Dendritic cell treated with granulocyte-macrophage colony-stimulating factor and Interleukin-4, amounts not matched to agents 40 ng/mL and 50 ng/mL, for 4 days (primary cell): ENCODE measurements at regions of chr16 and their contacts with region 1.

Region 1: DNA sequence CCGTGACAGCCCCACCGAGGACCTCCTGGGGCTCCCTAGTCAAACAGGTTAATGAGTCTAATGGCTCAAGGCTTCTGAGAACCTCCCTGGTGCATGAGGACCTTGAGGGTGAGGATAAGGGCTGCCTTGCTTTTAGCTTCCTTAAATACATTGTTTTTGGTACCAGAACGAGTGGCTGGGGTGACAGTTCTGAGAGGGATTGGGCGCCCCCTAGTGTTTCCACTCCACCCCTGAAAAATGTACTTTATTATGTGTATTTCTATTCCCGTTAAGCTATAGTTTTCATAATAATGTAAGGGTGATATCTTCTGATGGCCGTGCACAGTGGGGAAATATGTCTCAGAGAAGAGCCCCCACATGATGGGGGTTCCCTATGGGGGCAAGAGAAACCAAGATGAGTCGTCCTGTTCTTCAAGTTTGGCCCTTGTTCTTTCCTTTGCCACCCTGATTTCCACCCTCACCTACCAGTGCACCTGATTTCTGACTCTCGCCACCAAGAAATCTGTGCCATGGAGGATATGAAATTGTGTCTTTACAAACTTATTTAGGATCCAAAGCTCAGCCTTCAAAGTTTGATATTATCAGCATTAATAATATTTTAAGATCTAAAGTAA is 14.5 kb upstream of the VWA3A start:
- H3K4me3 Mint-ChIP-seq: no peak overlapping the region
- H3K27ac Mint-ChIP-seq: no peak overlapping the region
- H3K4me1 Mint-ChIP-seq: no peaks in the 10 kb centered on the region
- H3K27me3 Mint-ChIP-seq: no peaks in the 10 kb centered on the region

Region 2: DNA sequence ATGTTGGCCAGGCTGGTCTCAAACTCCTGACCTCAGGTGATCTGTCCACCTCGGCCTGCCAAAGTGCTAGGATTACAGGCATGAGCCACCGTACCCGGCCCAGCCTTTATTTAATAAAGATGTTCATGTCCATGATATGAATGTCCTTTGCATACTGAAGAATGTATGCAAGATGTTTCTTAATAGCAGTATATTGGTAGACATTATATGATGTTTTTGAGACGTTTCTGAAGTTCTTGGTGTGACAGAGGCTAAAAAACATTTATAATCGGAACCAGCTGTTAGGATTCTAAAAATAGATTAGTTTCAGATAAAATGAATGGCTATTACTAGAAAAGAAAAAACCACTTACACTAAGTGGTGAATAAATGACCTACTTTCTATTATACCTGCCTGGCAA is 88.7 kb before region 1 on chr16:
- intact Hi-C with region 1: no loop called
- H3K4me3 Mint-ChIP-seq: no peak overlapping the region
- H3K27ac Mint-ChIP-seq: no peak overlapping the region
- H3K4me1 Mint-ChIP-seq: no peaks in the 10 kb centered on the region
- H3K27me3 Mint-ChIP-seq: no peaks in the 10 kb centered on the region

Region 3: DNA sequence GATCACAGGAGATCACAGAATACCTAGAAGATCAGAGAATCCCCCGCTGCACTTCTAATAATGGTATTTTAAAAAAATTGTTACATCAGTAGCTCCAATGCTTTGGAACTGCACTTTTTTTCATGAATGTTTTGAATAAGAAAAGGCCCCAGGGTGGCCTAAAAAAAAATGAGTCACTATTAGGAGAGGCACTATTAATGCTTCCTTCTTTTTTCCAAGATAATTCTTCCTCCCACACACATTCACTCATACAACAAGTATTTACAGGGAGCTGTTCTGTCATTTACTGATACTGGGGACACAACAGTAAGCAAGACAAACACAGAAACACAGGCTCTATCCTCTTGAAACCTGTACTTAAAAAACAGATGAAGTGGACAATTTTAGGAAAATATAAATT is 76.2 kb before region 1 on chr16:
- intact Hi-C with region 1: loop called (anchors 2 kb)
- H3K4me3 Mint-ChIP-seq: no peak overlapping the region
- H3K27ac Mint-ChIP-seq: no peak overlapping the region
- H3K4me1 Mint-ChIP-seq: peaks cover 22% of the 10 kb centered on the region
- H3K27me3 Mint-ChIP-seq: peaks cover 9% of the 10 kb centered on the region

Region 4: GRCh38 chr16:22050963-22051362 is 26.8 kb before region 1 on chr16:
- intact Hi-C with region 1: no loop called
- H3K4me3 Mint-ChIP-seq: no peak overlapping the region
- H3K27ac Mint-ChIP-seq: no peak overlapping the region
- H3K4me1 Mint-ChIP-seq: peaks cover 11% of the 10 kb centered on the region
- H3K27me3 Mint-ChIP-seq: no peaks in the 10 kb centered on the region

Region 5: DNA sequence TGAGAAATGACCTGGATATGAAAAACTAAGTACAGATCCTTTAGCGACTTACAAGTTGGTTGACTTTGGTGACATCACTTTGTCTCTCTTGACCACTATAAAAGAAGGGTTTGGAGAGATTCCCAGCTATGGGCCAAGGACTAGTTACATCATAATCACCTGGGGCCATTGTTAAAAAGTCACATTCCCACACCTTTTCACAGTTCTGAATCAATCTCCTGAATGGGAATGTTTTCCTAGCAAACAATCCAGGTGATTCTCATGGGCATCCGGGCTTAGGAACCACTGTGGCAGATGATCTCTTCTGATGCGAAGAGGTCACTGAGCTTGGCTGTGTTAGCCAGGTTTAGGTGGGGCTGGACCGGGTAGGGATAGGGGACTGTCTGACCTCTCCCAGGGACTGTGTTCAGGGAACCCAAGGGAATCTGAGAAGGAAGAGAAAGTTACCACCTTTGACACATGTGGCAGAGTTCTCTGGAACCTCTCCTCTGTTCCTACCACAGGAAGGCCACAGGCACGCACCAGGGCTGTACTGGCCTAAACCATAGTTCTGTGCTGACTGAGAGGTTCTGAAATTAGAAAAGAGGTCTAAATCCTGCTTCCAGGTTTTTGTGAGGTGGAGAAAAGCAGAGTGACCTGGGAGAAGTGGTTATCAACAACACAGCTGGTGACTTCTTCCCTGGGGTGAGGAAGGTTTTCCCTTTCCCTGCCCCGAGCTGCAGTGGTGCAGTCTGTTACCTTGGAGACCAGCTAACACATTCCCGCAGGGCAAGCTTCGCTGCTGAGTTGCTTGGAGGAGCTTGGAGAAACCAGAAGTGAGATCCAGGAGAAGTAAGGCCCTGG is 14.2 kb after region 1 on chr16 and contains the start of gene VWA3A:
- intact Hi-C with region 1: no loop called
- H3K4me3 Mint-ChIP-seq: no peak within 1 kb of the TSS
- H3K27ac Mint-ChIP-seq: no peak within 1 kb of the TSS
- H3K4me1 Mint-ChIP-seq: no peaks in the 10 kb centered on the region
- H3K27me3 Mint-ChIP-seq: peaks cover 5% of the 10 kb centered on the region

Region 6: GRCh38 chr16:22424161-22424937 is 346.5 kb after region 1 on chr16:
- intact Hi-C with region 1: no loop called
- H3K4me3 Mint-ChIP-seq: no peak overlapping the region
- H3K27ac Mint-ChIP-seq: no peak overlapping the region
- H3K4me1 Mint-ChIP-seq: no peaks in the 10 kb centered on the region
- H3K27me3 Mint-ChIP-seq: no peaks in the 10 kb centered on the region